Activated CD4-positive, alpha-beta memory T cell treated with anti-CD3 and anti-CD28 coated beads, Interleukin-2, amount 10 ng/mL, durations not matched to agents 7 days and 5 days (primary cell): ENCODE measurements at regions of chr16 and their contacts with region 1.

Region 1: GRCh38 chr16:70251629-70252354 is at the start of gene EXOSC6:
- DNase-seq: peak; percentile 95
- H3K4me3 Mint-ChIP-seq: peak within 1 kb of the TSS; percentile 84
- H3K27ac Mint-ChIP-seq: peak within 1 kb of the TSS; percentile 88
- H3K4me1 Mint-ChIP-seq: peaks cover 20% of the 10 kb centered on the region
- H3K27me3 Mint-ChIP-seq: no peaks in the 10 kb centered on the region
- total RNA-seq, gene EXOSC6: 24.3 to 24.4 TPM

Region 2: DNA sequence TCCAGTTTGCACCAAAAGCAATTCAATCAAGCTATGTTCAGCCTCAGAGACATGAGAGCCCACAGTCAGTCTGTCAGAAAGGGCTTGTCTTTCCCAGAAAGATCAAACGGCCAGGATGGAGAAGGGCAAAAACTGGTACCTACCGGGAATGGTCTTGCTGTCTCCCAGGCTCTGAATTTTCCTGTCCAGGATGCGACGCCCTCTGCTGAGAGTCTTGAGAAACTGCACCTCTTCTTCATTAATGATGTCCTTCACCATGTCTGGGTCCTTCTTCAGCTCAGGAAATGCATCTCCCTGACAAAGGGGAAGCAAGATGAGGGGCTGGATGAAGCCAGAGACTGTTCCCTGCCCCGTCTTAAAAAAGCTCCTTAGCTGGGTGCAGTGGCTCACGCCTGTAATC is 15.7 kb after region 1 on chr16:
- CTCF ChIA-PET with region 1: interaction called, 19 read pairs
- POLR2A ChIA-PET with region 1: interaction called, 5 read pairs
- DNase-seq: no peak
- H3K4me3 Mint-ChIP-seq: no peak overlapping the region
- H3K27ac Mint-ChIP-seq: no peak overlapping the region
- H3K4me1 Mint-ChIP-seq: no peaks in the 10 kb centered on the region
- H3K27me3 Mint-ChIP-seq: no peaks in the 10 kb centered on the region

Region 3: GRCh38 chr16:70289229-70290098 is 37.7 kb after region 1 on chr16 and contains the start of gene AARS1:
- CTCF ChIA-PET with region 1: interaction called, 8 read pairs
- POLR2A ChIA-PET with region 1: interaction called, 24 read pairs
- DNase-seq: peak; percentile 96
- H3K4me3 Mint-ChIP-seq: peak within 1 kb of the TSS; percentile 99
- H3K27ac Mint-ChIP-seq: peak within 1 kb of the TSS; percentile 98
- H3K4me1 Mint-ChIP-seq: peaks cover 32% of the 10 kb centered on the region
- H3K27me3 Mint-ChIP-seq: no peaks in the 10 kb centered on the region
- total RNA-seq, gene AARS1: 128 to 129 TPM

Region 4: DNA sequence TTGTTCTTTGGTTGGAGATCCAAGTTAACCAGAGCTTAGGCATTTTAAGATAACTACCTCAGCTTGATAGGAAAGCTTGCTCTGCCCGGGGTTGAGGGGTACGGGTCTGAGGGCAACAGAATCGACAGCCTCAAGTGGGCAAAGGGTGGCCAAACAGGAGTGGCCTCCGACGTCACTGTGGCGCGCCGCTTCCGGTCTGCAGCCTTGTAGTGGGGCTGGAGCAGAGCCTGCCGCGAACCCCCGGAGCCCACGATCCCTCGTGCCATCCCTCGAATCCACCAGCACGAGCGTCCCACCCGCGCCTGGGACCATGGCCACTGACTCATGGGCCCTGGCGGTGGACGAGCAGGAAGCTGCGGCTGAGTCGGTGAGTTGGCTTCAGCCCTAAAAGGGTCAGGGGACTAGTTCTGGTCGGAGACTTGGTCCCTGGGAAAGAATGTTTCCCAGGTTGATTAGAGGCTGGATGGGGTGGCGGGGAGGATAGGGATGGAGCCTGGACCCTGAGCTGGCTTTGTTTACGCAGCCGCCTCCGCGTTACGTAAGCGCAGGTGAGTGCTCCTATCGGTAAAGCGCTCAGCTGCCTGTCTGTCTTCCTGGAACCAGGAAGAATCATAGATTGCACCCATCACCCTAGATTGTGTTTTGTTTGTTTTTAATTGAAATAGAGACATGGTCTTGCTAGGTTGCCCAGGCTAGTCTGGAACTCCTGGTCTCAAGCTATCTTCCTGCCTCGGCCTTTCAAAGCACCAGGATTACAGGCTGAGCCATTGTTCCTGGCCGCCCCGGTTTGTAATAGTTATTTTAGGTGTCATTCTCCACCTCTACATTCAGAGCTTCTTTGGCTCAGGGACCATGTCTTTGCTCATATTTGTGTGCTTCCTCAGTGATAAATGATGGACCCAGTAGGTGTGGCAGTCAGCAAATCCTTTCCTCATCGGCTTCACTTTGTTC is 47.5 kb after region 1 on chr16 and contains the start of gene DDX19B:
- CTCF ChIA-PET with region 1: interaction called, 10 read pairs
- POLR2A ChIA-PET with region 1: interaction called, 7 read pairs
- DNase-seq: peak; percentile 75
- H3K4me3 Mint-ChIP-seq: peak within 1 kb of the TSS; percentile 81
- H3K27ac Mint-ChIP-seq: peak within 1 kb of the TSS; percentile 88
- H3K4me1 Mint-ChIP-seq: peaks cover 36% of the 10 kb centered on the region
- H3K27me3 Mint-ChIP-seq: no peaks in the 10 kb centered on the region
- total RNA-seq, gene DDX19B: 33.2 to 35.8 TPM

Region 5: GRCh38 chr16:70478912-70479341 is 227.1 kb after region 1 on chr16:
- CTCF ChIA-PET with region 1: no interaction called
- POLR2A ChIA-PET with region 1: no interaction called
- DNase-seq: no peak
- H3K4me3 Mint-ChIP-seq: no peak overlapping the region
- H3K27ac Mint-ChIP-seq: no peak overlapping the region
- H3K4me1 Mint-ChIP-seq: peaks cover 31% of the 10 kb centered on the region
- H3K27me3 Mint-ChIP-seq: no peaks in the 10 kb centered on the region